ENCODE measurements at regions of chr10 and their contacts with region 1.

Region 1: DNA sequence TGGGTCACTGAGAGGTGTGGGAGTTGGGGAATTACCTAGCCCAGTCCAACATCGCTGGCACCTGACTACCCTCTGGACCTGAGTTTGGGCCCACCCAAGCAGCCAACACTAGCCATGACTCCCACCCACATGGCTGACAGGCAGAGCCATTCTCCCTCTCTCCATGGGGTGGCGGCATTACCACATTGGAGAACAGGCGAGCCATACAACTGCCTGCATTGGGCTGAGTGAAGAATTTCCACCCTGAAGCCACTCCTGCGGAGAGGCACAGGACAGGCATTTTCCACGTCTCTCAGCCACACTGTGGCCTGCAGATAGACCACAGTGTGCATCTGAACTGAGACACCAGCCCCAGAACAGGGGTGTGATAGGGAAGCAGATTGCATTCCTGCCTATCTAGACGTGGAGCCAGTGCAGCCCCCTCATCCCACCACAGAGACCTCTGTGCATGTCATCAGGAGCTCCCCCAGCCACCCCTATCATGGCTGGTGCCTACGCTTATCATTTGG is 58.2 kb upstream of the ANTXRL start:
- DNase-seq: peak; percentile 54
- H3K4me3 ChIP-seq: no peak overlapping the region
- H3K27ac ChIP-seq: no peak overlapping the region
- H3K4me1 ChIP-seq: no peaks in the 10 kb centered on the region
- H3K27me3 ChIP-seq: no peaks in the 10 kb centered on the region
- CTCF ChIP-seq: peak; percentile 56 to 81
- POLR2A ChIP-seq: no peak

Region 2: DNA sequence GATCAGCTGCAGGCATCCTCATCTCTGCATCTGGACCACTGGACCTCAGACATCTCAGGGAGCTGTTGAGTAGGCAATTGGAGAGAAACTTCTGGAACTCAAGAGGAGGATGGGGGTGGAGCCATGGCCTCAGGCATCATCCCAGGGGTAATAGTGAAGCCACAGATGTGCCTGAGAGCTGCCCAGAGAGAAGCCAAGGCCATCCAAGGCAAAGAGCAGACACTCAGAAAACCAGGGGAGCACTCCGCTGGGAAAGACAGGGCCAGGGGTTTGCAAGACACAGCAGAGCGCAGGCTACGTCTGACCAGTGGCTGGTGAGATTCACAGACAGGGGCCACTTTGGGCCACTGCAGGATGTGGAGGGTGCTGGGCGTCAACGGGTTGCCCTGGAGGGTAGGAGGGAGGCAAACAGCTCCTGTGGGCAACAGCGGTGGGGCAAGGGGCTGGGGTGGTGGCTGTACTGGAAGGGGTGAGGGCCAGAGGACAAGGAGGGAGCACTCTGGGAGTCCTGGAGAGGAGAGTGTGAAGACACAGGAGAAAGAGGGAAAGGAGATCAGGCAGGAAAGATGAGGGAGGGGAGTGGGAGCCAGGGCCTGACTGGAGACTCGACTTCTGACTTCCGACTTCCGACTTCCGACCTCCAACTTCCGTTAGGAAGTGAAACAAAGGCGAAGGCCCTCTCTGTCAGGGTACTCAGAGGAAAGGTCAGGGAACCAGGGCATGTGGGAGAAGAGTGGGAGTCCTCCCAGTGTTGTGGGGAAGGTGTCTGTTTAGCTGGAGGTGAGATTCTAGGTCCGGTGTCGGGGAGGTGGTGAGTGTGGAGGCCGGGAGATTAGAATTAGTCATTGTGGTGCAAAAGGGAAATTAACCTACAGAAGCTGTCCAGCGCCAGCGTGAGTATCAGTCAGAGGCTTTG is 11.5 kb before region 1 on chr10:
- CTCF ChIA-PET with region 1: interaction called, 30 read pairs
- POLR2A ChIA-PET with region 1: no interaction called
- dilution Hi-C with region 1: no loop called
- intact Hi-C with region 1: no loop called
- DNase-seq: no peak
- H3K4me3 ChIP-seq: no peak overlapping the region
- H3K27ac ChIP-seq: no peak overlapping the region
- H3K4me1 ChIP-seq: no peaks in the 10 kb centered on the region
- H3K27me3 ChIP-seq: no peaks in the 10 kb centered on the region
- CTCF ChIP-seq: no peak
- POLR2A ChIP-seq: no peak

Region 3: GRCh38 chr10:46239247-46239646 is 10.6 kb after region 1 on chr10:
- CTCF ChIA-PET with region 1: interaction called, 31 read pairs
- POLR2A ChIA-PET with region 1: no interaction called
- dilution Hi-C with region 1: no loop called
- intact Hi-C with region 1: no loop called
- DNase-seq: no peak
- H3K4me3 ChIP-seq: no peak overlapping the region
- H3K27ac ChIP-seq: no peak overlapping the region
- H3K4me1 ChIP-seq: no peaks in the 10 kb centered on the region
- H3K27me3 ChIP-seq: peaks cover 3% of the 10 kb centered on the region in 2 experiments
- CTCF ChIP-seq: no peak
- POLR2A ChIP-seq: no peak

Region 4: GRCh38 chr10:46255801-46256747 is 27.5 kb after region 1 on chr10:
- CTCF ChIA-PET with region 1: interaction called, 23 read pairs
- POLR2A ChIA-PET with region 1: no interaction called
- dilution Hi-C with region 1: no loop called
- intact Hi-C with region 1: no loop called
- DNase-seq: peak; percentile 58
- H3K4me3 ChIP-seq: no peak overlapping the region
- H3K27ac ChIP-seq: no peak overlapping the region
- H3K4me1 ChIP-seq: no peaks in the 10 kb centered on the region
- H3K27me3 ChIP-seq: peaks cover 2% of the 10 kb centered on the region in 2 experiments
- CTCF ChIP-seq: peak; percentile 35 to 44
- POLR2A ChIP-seq: no peak